Heart left ventricle (tissue), 16 donors: ENCODE measurements at regions of chr15 and their contacts with region 1.

Region 1: DNA sequence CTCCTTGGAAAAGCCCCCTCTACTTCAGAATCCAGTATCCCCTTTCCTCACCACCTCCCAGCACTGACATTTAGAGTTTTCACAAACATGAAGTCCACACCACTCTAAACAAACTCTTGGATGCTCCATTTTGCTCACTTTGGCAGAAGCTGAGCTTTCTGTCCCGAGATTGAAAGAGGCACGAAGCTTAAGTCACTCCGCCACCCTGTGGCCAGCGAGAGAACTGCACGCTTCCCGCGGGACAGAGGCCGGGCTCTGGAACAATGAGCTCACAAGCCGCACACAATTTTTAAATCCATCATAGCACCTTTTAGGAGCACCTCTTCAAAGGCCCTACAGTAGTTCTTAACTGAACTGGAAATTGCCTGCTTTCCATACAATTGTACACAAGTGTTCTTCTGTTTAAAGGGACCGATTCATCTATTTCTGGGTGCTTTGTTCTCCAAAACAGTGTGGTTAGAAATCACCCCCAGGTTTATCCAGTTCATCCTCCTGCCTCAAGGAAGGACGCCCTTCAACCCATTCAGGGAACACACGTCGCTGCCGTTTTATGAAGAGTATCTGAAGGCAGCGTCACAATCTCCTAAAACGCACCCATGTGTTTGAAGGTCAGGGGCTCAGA is 226.1 kb downstream of the VPS13C start:
- DNase-seq: peak; percentile 72 to 88 (median 79)
- ATAC-seq: peak in 3 of 4 donors; percentile 75 to 84 (median 80)
- H3K4me3 ChIP-seq: no peak overlapping the region
- H3K27ac ChIP-seq: no peak overlapping the region
- H3K4me1 ChIP-seq: peaks cover 0 to 9% (median 3%) of the 10 kb centered on the region in 12 donors
- H3K27me3 ChIP-seq: no peaks in the 10 kb centered on the region
- CTCF ChIP-seq: peak in 11 of 12 donors; percentile 91 to 98 (median 96)
- POLR2A ChIP-seq: no peak

Region 2: GRCh38 chr15:60362321-60363086 is 1471.7 kb before region 1 on chr15:
- intact Hi-C with region 1: loop called in 1 of 10 experiments (anchors 10 kb)
- DNase-seq: peak in 1 of 5 donors; percentile 42
- ATAC-seq: peak in 3 of 4 donors; percentile 71 to 72 (median 71)
- H3K4me3 ChIP-seq: no peak overlapping the region
- H3K27ac ChIP-seq: peak overlapping the region in 10 of 12 donors; percentile 33 to 80 (median 50)
- H3K4me1 ChIP-seq: peaks cover 6 to 63% (median 32%) of the 10 kb centered on the region in 12 donors
- H3K27me3 ChIP-seq: no peaks in the 10 kb centered on the region
- CTCF ChIP-seq: no peak
- POLR2A ChIP-seq: no peak

Region 3: DNA sequence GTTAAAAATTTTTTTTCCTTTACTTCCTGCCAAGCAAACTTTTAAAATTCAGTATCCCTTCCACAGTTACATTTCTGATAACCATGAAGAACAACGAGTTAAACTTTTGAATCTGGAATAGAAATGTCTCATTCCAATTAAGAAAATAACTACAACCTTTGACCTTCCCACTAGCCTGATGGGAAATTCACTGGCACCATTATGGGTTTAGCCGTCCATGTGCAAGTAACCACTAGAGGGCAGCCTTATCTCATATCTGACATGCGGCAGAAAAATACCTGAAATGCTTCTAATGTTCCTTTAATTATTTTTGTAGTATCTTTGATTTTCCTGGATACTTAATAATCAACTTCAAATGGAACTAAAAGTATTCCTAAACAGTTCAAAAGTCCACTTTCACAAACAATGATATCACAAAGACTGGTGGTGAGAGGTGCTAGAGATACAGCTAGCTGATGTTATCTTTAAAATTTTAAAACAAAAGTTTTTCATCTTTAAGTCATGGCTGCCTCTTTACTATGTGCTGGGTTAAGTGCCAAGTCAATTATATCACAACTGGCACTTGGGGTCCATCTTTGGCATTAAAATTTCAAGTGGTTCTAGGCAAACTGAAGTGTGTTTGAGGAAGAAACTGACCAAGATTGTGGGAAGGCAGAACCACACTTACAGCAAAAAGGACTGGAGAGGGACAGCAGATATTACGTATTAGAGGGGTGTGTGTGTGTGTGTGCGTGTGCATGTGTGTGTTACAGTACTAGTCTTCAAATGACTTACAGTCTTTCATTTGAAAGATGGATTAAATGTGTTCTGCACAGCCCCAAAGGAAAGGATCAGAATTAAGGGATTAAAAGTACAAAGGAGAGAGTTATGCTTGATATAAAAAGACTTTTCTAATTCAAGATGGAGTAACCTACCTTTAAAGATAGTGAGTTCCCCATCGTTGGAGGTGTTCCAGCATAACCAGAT is 1248.2 kb before region 1 on chr15:
- intact Hi-C with region 1: loop called (anchors 2 to 10 kb)
- DNase-seq: peak in 4 of 5 donors; percentile 33 to 60 (median 40)
- ATAC-seq: peak; percentile 60 to 81 (median 79)
- H3K4me3 ChIP-seq: no peak overlapping the region
- H3K27ac ChIP-seq: peak overlapping the region in 2 of 12 donors; percentile 7 to 73
- H3K4me1 ChIP-seq: peaks cover 0 to 66% (median 23%) of the 10 kb centered on the region in 12 donors
- H3K27me3 ChIP-seq: no peaks in the 10 kb centered on the region
- CTCF ChIP-seq: peak; percentile 82 to 97 (median 91)
- POLR2A ChIP-seq: no peak

Region 4: GRCh38 chr15:61051569-61052031 is 782.6 kb before region 1 on chr15:
- intact Hi-C with region 1: loop called in 2 of 10 experiments (anchors 10 kb)
- DNase-seq: peak in 4 of 5 donors; percentile 37 to 44 (median 43)
- ATAC-seq: peak; percentile 79 to 92 (median 91)
- H3K4me3 ChIP-seq: no peak overlapping the region
- H3K27ac ChIP-seq: no peak overlapping the region
- H3K4me1 ChIP-seq: peaks cover 0 to 12% (median 4%) of the 10 kb centered on the region in 12 donors
- H3K27me3 ChIP-seq: no peaks in the 10 kb centered on the region
- CTCF ChIP-seq: peak; percentile 31 to 76 (median 64)
- POLR2A ChIP-seq: no peak

Region 5: DNA sequence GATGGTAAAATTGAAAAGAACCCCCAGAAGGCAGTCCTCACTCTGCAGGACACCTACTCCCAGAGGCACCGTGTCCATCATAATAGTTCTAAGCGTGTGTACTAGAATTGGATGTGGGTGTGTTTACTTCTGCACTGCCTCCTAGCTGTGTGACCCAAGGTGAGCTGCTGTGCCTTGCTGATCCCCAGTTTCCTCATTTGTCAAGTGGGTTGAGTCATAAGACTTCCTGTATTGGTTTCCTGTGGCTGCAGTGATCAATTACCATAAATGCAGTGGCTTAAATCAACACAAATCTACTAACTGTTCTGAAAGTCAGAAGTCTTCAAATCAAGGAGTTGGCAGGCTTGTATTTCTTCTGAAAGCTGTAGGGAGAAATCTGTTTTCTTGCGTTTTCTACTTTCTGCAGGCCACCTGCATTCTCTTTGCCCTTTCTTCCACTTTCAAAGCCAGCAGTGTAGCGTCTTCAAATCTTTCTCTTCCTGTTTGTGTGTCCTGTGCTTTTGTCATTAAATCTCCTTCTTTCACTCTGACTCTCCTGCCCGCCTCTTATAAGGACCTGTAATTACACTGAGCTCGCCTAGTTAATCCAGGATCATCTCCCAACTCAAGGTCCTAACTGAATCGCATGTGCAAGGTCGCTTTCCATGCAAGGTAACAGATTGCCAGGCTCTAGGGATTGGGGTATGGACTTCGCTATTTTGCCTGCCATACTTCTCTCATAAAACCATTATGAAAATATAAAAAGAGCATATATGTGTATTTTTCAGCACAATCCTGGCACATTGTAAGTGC is 664.1 kb before region 1 on chr15:
- intact Hi-C with region 1: loop called in 2 of 10 experiments (anchors 5 to 10 kb)
- DNase-seq: no peak
- ATAC-seq: no peak
- H3K4me3 ChIP-seq: no peak overlapping the region
- H3K27ac ChIP-seq: no peak overlapping the region
- H3K4me1 ChIP-seq: peaks cover 0 to 23% (median 9%) of the 10 kb centered on the region in 12 donors
- H3K27me3 ChIP-seq: no peaks in the 10 kb centered on the region
- CTCF ChIP-seq: no peak
- POLR2A ChIP-seq: no peak

Region 6: GRCh38 chr15:61195116-61196002 is 638.8 kb before region 1 on chr15:
- intact Hi-C with region 1: loop called in 2 of 10 experiments (anchors 5 to 10 kb)
- DNase-seq: no peak
- ATAC-seq: no peak
- H3K4me3 ChIP-seq: no peak overlapping the region
- H3K27ac ChIP-seq: no peak overlapping the region
- H3K4me1 ChIP-seq: peaks cover 0 to 5% (median 0%) of the 10 kb centered on the region in 12 donors
- H3K27me3 ChIP-seq: no peaks in the 10 kb centered on the region
- CTCF ChIP-seq: peak; percentile 38 to 67 (median 52)
- POLR2A ChIP-seq: no peak

Region 7: DNA sequence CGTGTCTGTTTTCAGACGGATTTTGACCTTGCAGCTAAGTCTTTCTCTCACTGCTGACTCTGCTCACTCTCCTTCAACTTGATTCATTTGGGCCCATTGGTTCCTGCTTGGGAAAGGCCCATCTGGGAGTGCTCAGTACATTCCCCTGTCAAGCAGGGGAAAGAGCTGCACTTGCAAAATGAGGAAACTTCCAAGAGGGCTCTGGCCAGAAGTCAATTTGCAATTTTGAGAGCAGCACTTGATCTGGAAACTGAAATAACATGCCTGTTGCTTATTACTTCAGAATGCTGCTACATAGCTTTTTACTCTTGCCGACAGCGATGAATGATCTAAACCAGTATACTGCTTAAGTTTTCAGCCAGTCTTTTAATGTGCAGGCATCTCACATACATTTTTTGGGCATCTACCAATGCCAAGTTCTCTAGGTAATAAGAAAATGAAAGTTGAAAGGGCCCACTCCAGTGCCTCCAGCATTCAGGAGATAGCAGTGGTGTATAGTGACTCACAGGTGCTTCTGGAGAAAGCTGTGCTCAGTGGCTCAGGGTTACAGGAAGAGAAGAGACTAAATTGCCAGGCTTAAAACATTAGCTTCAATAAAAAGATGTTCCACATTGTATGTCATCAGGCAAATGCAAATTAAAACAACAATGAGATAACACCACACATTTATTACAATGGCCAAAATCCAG is 535.0 kb before region 1 on chr15:
- intact Hi-C with region 1: no loop called
- DNase-seq: no peak
- ATAC-seq: no peak
- H3K4me3 ChIP-seq: no peak overlapping the region
- H3K27ac ChIP-seq: no peak overlapping the region
- H3K4me1 ChIP-seq: no peaks in the 10 kb centered on the region
- H3K27me3 ChIP-seq: peaks cover 0 to 3% (median 0%) of the 10 kb centered on the region in 9 donors
- CTCF ChIP-seq: no peak
- POLR2A ChIP-seq: no peak

Region 8: DNA sequence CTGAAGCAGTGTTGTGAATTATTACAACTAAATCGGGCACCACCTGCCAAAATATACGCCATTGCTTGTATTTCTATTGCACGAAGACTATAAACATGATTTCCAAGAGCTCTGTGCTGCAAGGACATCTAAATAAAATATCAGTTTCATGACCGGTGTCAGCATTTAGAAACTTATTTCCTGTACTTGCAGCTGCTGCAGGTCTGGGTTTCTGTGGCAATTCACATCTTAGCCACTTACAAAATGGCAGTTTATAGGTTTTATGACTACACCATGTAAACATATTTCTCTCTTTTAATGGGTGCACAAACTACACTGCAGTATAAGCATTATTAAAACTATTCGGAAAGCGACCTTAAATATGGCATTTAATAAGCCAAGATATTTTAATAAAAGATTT is 133.4 kb before region 1 on chr15:
- intact Hi-C with region 1: no loop called
- DNase-seq: no peak
- ATAC-seq: no peak
- H3K4me3 ChIP-seq: no peak overlapping the region
- H3K27ac ChIP-seq: no peak overlapping the region
- H3K4me1 ChIP-seq: no peaks in the 10 kb centered on the region
- H3K27me3 ChIP-seq: peaks cover 0 to 4% (median 0%) of the 10 kb centered on the region in 9 donors
- CTCF ChIP-seq: no peak
- POLR2A ChIP-seq: no peak

Region 9: DNA sequence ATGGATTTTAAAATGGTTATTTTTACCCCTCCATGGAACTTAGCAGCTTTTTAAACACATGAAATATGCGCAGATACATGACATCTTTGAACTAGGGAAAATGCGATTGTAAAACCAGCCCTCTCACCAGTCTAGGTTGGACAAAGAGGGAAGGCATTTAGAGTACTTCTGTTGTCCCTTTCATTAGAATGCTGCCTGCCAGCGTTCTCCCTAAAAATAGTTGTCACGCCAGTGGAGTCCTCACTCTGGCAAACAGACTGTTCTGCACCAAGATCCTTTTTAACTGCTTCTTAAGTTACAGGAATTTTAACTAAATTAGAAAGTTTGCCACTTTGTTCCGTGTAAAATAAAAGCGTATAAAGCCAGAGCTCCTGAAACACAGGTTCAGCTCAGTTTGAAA is 69.2 kb before region 1 on chr15:
- intact Hi-C with region 1: no loop called
- DNase-seq: no peak
- ATAC-seq: peak in 2 of 4 donors; percentile 47 to 60
- H3K4me3 ChIP-seq: no peak overlapping the region
- H3K27ac ChIP-seq: no peak overlapping the region
- H3K4me1 ChIP-seq: no peaks in the 10 kb centered on the region
- H3K27me3 ChIP-seq: peaks cover 0 to 14% (median 0%) of the 10 kb centered on the region in 9 donors
- CTCF ChIP-seq: no peak
- POLR2A ChIP-seq: no peak

Region 10: DNA sequence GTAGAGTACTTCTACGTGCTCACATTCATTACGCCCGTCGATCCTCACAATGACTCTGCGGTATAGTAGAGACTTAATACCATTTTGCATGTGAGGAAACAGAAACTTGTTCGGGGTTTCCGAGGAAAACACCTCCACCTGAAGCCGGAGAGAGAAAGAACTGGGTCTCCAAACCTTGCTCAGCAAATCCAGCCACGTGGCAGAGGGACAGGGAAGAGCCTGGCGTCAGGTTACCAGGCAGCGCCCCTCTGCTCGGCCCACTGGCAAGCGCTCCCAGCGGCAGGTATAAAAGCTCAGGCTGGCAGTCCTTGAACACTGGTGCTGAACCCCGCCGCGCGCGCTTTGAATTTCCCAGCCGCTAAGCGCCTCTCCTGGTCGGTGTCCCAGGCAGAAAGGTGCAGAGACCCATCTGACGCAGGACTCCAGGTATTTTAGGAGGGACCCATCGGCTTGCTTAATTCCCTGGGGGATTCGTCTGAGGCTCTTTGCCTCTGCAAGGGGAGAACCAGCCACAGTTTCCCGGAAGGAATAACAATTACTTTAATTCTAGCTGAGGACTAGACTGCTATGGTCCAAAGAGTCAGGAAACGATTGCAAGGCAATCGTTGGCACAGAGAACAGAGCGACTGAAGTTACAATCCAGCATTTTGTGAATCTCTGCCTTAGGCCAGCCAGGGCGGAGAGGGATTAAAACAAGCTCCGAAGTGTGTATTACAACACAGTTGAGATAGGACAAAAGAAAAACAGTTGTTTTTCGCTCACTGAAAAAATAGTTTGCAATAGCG is 232.7 kb after region 1 on chr15 and contains the start of gene C2CD4A:
- intact Hi-C with region 1: no loop called
- DNase-seq: peak; percentile 52 to 78 (median 56)
- ATAC-seq: peak; percentile 71 to 86 (median 74)
- H3K4me3 ChIP-seq: peak within 1 kb of the TSS; percentile 28 to 73 (median 56)
- H3K27ac ChIP-seq: peak within 1 kb of the TSS in 2 of 12 donors; percentile 7 to 40
- H3K4me1 ChIP-seq: peaks cover 0 to 26% (median 12%) of the 10 kb centered on the region in 12 donors
- H3K27me3 ChIP-seq: peaks cover 0 to 12% (median 0%) of the 10 kb centered on the region in 9 donors
- CTCF ChIP-seq: peak in 4 of 12 donors; percentile 9 to 25 (median 16)
- POLR2A ChIP-seq: no peak
- total RNA-seq, gene C2CD4A: not detected